T-cell (primary cell): ENCODE measurements at regions of chr19 and their contacts with region 1.

Region 1: DNA sequence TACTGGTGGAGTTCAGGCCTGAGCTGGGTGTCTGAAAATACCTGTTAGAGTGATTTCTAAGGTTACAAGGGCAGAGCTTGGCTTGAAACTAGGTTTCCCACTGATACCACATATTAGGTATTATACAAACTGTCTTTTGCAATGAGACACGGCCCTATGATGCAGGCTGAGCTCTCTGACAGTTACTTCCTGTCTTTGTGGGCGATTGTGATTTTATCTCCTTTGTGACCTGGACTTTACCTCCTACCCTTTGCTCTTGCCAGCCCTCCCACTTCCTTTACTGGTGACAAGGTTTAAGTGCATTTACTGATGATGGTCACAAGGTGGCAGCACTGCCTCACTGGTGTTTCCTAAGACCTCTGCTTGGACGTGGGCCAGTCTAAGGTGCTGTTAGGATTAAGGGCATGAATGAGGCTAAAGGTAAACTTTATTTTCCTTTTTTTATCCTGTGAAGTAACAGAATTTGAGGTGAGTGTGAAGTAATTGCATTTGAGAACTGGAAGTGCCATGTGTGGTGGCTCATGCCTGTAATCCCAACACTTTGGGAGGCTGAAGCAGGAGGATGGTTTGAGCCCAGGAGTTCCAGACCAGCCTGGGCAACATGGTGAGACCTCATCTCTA is 7.7 kb upstream of the CXCL17 start:
- DNase-seq: peak; percentile 47 to 97 (median 73)
- ATAC-seq: peak; percentile 94 to 99 (median 98)
- H3K4me3 ChIP-seq: peak overlapping the region in 1 of 2 donors; percentile 38
- H3K4me3 Mint-ChIP-seq: no peak overlapping the region
- H3K27ac ChIP-seq: peak overlapping the region; percentile 88
- H3K27ac Mint-ChIP-seq: no peak overlapping the region
- H3K4me1 ChIP-seq: peaks cover 8 to 18% of the 10 kb centered on the region in 2 experiments
- H3K4me1 Mint-ChIP-seq: peaks cover 6 to 17% (median 8%) of the 10 kb centered on the region in 3 donors
- H3K27me3 ChIP-seq: no peaks in the 10 kb centered on the region
- H3K27me3 Mint-ChIP-seq: peaks cover 2 to 4% of the 10 kb centered on the region in 2 donors

Region 2: DNA sequence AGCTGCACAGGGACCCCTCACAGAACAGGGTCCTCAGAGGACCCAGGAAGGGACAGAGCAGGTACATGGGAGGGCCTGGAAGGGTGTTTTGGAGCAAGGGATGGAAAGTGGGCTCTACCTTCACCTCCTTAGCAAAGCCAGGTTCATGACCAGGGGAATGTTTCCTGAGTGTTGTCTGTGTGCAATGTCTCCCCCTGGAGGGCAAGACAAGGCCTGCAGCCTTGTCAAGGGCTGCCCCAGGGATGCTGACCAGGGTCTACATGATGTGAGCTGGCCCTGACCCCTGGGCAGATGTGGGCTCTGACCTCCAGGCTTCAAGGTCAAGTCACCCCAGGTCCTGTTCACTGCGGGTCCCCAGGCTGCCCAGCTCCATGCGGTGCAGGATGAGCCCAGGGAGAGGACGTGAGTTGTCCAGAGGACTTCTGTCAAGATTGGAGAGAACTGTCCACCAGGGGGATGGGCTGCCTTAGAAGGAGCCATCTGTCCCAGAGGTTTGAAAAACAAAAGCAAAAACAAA is 78.9 kb after region 1 on chr19:
- CTCF ChIA-PET with region 1: interaction called, 8 to 35 read pairs
- POLR2A ChIA-PET with region 1: interaction called in 1 of 2 experiments, 3 read pairs
- DNase-seq: peak; percentile 27 to 82 (median 56)
- ATAC-seq: peak; percentile 76 to 84 (median 80)
- H3K4me3 ChIP-seq: peak overlapping the region; percentile 40 to 48
- H3K4me3 Mint-ChIP-seq: peak overlapping the region; percentile 76 to 84 (median 83)
- H3K27ac ChIP-seq: peak overlapping the region; percentile 48
- H3K27ac Mint-ChIP-seq: peak overlapping the region; percentile 92 to 95
- H3K4me1 ChIP-seq: peaks cover 16 to 35% of the 10 kb centered on the region in 2 experiments
- H3K4me1 Mint-ChIP-seq: peaks cover 35 to 43% (median 42%) of the 10 kb centered on the region in 3 donors
- H3K27me3 ChIP-seq: no peaks in the 10 kb centered on the region
- H3K27me3 Mint-ChIP-seq: no peaks in the 10 kb centered on the region